ENCODE measurements at regions of chr11 and their contacts with region 1.

Region 1: GRCh38 chr11:128290106-128290840 is 297.1 kb downstream of the ETS1 start:
- DNase-seq: peak; percentile 84 to 89 (median 86)
- H3K4me3 ChIP-seq: peak overlapping the region; percentile 68
- H3K4me3 Mint-ChIP-seq: peak overlapping the region; percentile 87 to 95 (median 94)
- H3K27ac ChIP-seq: peak overlapping the region; percentile 90
- H3K27ac Mint-ChIP-seq: peak overlapping the region; percentile 98 to 100 (median 99)
- H3K4me1 ChIP-seq: peaks cover 89% of the 10 kb centered on the region
- H3K4me1 Mint-ChIP-seq: peaks cover 70 to 100% (median 84%) of the 10 kb centered on the region in 4 donors
- H3K27me3 ChIP-seq: no peaks in the 10 kb centered on the region
- H3K27me3 Mint-ChIP-seq: no peaks in the 10 kb centered on the region

Region 2: GRCh38 chr11:127042445-127042844 is 1247.8 kb before region 1 on chr11:
- CTCF ChIA-PET with region 1: no interaction called
- POLR2A ChIA-PET with region 1: no interaction called
- intact Hi-C with region 1: no loop called
- DNase-seq: no peak
- H3K4me3 ChIP-seq: no peak overlapping the region
- H3K4me3 Mint-ChIP-seq: no peak overlapping the region
- H3K27ac ChIP-seq: no peak overlapping the region
- H3K27ac Mint-ChIP-seq: no peak overlapping the region
- H3K4me1 ChIP-seq: no peaks in the 10 kb centered on the region
- H3K4me1 Mint-ChIP-seq: no peaks in the 10 kb centered on the region
- H3K27me3 ChIP-seq: no peaks in the 10 kb centered on the region
- H3K27me3 Mint-ChIP-seq: peaks cover 5 to 7% of the 10 kb centered on the region in 2 donors

Region 3: DNA sequence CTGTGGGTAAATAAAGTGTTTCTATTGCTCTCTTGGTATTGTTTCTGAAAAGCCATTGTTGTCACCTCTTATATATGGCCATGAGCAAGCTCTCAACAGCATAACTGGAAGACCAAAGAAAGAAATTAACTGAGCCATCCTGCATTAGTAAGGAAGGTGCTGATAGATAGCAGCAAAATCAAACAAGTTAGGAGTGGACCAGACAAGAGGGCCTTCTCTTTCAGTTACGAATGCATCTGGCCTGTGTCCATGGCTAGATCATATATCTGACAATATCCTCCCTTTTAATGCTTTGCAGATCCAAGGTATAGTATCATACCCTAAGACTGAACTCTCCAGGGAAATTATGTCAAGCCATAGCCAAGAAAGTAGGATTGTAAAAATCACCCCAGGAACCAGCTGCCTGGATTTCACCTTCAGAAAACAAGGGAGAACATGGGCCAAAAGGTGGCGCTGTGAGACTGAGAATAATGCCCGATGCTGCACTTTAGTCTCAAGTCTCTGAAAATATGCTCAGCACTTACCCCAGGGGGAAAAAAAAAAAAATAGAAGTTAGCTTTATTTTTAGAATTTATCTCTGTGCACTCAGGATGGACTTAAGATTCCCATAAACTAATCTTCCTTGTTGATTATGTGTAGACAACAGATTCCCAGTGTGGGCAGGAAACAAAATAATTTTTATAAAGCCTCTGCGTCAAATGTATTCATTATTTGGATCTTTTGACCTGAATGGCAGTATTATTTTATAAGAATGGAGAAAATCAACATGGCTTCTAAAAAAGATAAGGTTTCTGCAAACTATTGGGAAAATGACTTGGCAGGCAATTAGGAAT is 118.0 kb before region 1 on chr11:
- CTCF ChIA-PET with region 1: interaction called, 22 read pairs
- POLR2A ChIA-PET with region 1: interaction called, 3 read pairs
- intact Hi-C with region 1: loop called (anchors 1 kb)
- DNase-seq: peak; percentile 75 to 81 (median 77)
- H3K4me3 ChIP-seq: no peak overlapping the region
- H3K4me3 Mint-ChIP-seq: no peak overlapping the region
- H3K27ac ChIP-seq: no peak overlapping the region
- H3K27ac Mint-ChIP-seq: peak overlapping the region in 1 of 7 donors; percentile 11
- H3K4me1 ChIP-seq: no peaks in the 10 kb centered on the region
- H3K4me1 Mint-ChIP-seq: peaks cover 0 to 4% (median under 1%) of the 10 kb centered on the region in 4 donors
- H3K27me3 ChIP-seq: no peaks in the 10 kb centered on the region
- H3K27me3 Mint-ChIP-seq: no peaks in the 10 kb centered on the region

Region 4: GRCh38 chr11:128323381-128323780 is 33.1 kb after region 1 on chr11:
- CTCF ChIA-PET with region 1: interaction called, 75 read pairs
- POLR2A ChIA-PET with region 1: interaction called, 541 read pairs
- intact Hi-C with region 1: loop called (anchors 1 kb)
- DNase-seq: peak; percentile 60 to 70 (median 68)
- H3K4me3 ChIP-seq: peak overlapping the region in 1 of 2 donors; percentile 17
- H3K4me3 Mint-ChIP-seq: peak overlapping the region in 7 of 8 donors; percentile 28 to 78 (median 63)
- H3K27ac ChIP-seq: peak overlapping the region; percentile 92
- H3K27ac Mint-ChIP-seq: peak overlapping the region; percentile 87 to 99 (median 97)
- H3K4me1 ChIP-seq: peaks cover 83% of the 10 kb centered on the region
- H3K4me1 Mint-ChIP-seq: peaks cover 65 to 92% (median 79%) of the 10 kb centered on the region in 4 donors
- H3K27me3 ChIP-seq: no peaks in the 10 kb centered on the region
- H3K27me3 Mint-ChIP-seq: no peaks in the 10 kb centered on the region

Region 5: DNA sequence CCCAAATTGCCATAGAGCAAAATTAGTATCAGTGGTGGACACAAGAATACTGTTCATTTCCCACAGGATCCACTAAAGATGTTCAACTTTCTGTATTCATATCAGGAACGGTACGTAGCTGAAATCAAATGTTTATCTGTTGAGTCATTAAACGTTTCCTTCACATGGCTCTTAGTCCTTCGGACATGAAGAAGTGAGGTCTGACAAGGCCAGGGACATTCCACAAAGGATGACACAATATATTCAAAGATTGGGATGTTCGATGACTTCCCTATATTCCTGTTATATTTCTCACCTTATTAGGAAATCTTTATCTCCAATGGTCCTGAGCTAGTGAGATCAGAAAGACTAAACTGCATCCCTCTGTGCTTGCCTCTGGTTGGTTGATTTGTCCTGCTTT is 168.0 kb after region 1 on chr11:
- CTCF ChIA-PET with region 1: interaction called, 7 read pairs
- POLR2A ChIA-PET with region 1: interaction called, 651 read pairs
- intact Hi-C with region 1: no loop called
- DNase-seq: no peak
- H3K4me3 ChIP-seq: no peak overlapping the region
- H3K4me3 Mint-ChIP-seq: no peak overlapping the region
- H3K27ac ChIP-seq: no peak overlapping the region
- H3K27ac Mint-ChIP-seq: peak overlapping the region; percentile 5 to 57 (median 23)
- H3K4me1 ChIP-seq: peaks cover 74% of the 10 kb centered on the region
- H3K4me1 Mint-ChIP-seq: peaks cover 57 to 94% (median 76%) of the 10 kb centered on the region in 4 donors
- H3K27me3 ChIP-seq: no peaks in the 10 kb centered on the region
- H3K27me3 Mint-ChIP-seq: no peaks in the 10 kb centered on the region

Region 6: DNA sequence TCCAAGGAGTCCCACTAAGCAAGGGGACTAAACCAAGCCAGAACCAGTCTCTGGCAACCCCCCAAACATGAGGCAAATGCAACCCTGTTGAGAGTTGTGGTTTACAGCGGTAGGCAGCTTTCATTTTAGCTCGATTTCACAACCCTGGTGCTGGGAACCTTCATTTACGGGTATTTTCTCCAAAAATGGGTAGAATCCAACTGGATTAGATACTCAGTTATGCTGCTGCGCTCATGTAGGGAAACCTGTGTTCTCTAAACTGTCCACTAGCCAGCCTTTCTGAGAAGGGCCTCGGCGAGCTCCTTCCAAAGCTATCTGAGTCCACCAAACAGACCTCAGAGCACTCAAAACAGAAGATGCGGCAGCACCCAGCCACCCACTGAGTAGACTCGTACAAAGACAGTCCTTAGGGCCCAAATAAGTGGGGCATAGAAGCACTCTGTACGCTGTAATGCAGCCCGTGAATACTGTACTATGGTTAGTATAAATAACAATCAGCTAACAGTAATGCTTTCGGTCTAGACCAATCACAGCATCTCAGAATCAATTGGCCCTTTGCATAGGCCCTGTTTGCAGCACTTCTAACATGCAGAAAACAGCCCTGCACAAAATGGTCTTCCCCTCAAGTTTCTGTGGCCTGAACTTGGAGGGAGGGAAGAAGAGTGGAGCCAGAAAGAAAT is 192.4 kb after region 1 on chr11:
- CTCF ChIA-PET with region 1: interaction called, 12 read pairs
- POLR2A ChIA-PET with region 1: interaction called, 651 read pairs
- intact Hi-C with region 1: no loop called
- DNase-seq: peak; percentile 68 to 88 (median 72)
- H3K4me3 ChIP-seq: peak overlapping the region; percentile 27 to 47
- H3K4me3 Mint-ChIP-seq: peak overlapping the region; percentile 73 to 92 (median 81)
- H3K27ac ChIP-seq: peak overlapping the region; percentile 94
- H3K27ac Mint-ChIP-seq: peak overlapping the region; percentile 88 to 99 (median 99)
- H3K4me1 ChIP-seq: peaks cover 99% of the 10 kb centered on the region
- H3K4me1 Mint-ChIP-seq: peaks cover 86 to 98% (median 93%) of the 10 kb centered on the region in 4 donors
- H3K27me3 ChIP-seq: no peaks in the 10 kb centered on the region
- H3K27me3 Mint-ChIP-seq: no peaks in the 10 kb centered on the region

Region 7: DNA sequence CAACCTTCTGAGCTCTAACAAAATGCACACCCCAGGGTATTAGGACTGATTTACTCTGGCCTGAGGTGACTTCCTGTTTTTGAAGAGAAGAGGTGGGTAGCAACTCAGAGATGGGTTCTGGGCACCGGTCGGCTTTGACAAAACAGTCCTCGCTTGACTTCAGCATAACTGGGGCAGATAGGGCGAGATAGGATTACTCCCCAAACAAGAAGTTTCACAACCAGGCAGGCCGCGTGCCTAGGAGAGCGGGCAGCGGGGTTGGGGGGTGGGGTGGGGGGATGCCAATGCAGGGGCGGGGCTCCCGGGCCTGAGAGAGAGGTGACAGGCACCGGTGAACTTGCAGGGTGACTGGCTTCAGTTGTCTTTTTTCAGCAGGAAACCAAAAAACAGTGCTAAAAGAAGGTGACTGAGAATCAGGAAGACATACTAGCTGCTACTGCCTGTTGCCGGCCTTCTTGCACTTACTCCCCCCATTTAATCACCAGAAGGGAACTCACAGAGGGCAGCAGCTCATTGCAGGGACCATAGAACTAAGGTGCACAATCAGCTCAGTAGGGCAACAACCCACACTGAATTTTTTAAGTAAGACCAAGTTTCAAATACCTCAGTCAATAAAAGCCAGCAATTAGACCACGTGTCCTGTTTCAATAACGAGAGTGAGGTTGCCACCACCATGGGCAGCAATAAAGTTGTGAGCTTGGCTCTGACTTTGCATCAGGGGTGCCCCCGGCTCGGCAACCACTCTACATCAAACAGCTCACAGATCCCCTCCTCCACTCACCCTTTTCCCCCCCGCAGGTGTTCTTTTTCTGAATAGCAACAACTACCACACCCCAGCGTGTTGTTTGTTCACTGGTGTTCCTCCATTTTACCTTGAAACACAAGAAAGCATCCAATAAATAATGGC is 334.2 kb after region 1 on chr11:
- CTCF ChIA-PET with region 1: interaction called, 173 read pairs
- POLR2A ChIA-PET with region 1: interaction called, 62 read pairs
- intact Hi-C with region 1: no loop called
- DNase-seq: peak; percentile 69 to 83 (median 77)
- H3K4me3 ChIP-seq: peak overlapping the region in 1 of 2 donors; percentile 28
- H3K4me3 Mint-ChIP-seq: peak overlapping the region; percentile 67 to 91 (median 80)
- H3K27ac ChIP-seq: peak overlapping the region; percentile 67
- H3K27ac Mint-ChIP-seq: peak overlapping the region; percentile 96 to 98 (median 97)
- H3K4me1 ChIP-seq: peaks cover 85% of the 10 kb centered on the region
- H3K4me1 Mint-ChIP-seq: peaks cover 76 to 100% (median 89%) of the 10 kb centered on the region in 4 donors
- H3K27me3 ChIP-seq: no peaks in the 10 kb centered on the region
- H3K27me3 Mint-ChIP-seq: no peaks in the 10 kb centered on the region

Region 8: GRCh38 chr11:129100193-129100592 is 809.9 kb after region 1 on chr11:
- CTCF ChIA-PET with region 1: no interaction called
- POLR2A ChIA-PET with region 1: no interaction called
- intact Hi-C with region 1: no loop called
- DNase-seq: no peak
- H3K4me3 ChIP-seq: no peak overlapping the region
- H3K4me3 Mint-ChIP-seq: no peak overlapping the region
- H3K27ac ChIP-seq: no peak overlapping the region
- H3K27ac Mint-ChIP-seq: no peak overlapping the region
- H3K4me1 ChIP-seq: no peaks in the 10 kb centered on the region
- H3K4me1 Mint-ChIP-seq: no peaks in the 10 kb centered on the region
- H3K27me3 ChIP-seq: no peaks in the 10 kb centered on the region
- H3K27me3 Mint-ChIP-seq: peaks cover 2 to 3% of the 10 kb centered on the region in 2 donors

Measured in CD4-positive, alpha-beta memory T cell (primary cell).